Activated T-helper 2 cell treated with anti-CD3 and anti-CD28 coated beads, Interferon-gamma antibody, Interleukin-2, Interleukin-4, amounts not matched to agents 10 μg/mL and 5 μg/mL and 100 μg/mL, durations not matched to agents 14 hours and 24 hours and 36 hours (primary cell): ENCODE measurements at regions of chr7 and their contacts with region 1.

Region 1: DNA sequence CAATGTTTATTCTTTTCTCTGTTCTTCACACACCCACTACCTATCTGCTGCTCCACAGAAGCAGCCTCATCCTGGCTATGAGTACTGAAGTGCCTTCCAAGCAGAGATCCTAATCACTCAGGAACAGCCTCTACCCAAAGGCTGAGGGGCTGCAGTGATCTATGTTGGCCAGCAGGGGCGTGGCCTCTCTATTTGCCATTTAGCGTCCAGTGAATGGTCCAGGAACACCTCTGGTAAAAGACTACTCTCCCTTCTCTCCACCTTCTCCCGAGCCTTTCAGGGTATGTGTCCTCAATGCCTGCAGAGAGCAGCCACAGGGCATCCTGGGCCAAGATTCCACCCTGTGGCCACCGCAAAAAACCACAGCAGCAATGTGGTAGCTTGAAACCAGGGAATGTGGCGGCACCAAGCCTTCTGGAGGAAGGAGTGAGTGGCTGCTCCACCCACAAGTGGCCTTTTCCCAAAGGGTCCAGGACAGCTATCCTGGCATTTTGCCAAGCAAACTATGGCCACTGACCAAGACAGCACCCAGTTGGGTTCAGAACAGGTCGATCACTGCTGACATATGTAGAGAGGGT is 70.9 kb downstream of the SYPL1 start:
- DNase-seq: no peak
- H3K4me3 Mint-ChIP-seq: no peak overlapping the region
- H3K27ac Mint-ChIP-seq: no peak overlapping the region
- H3K4me1 Mint-ChIP-seq: peaks cover 6% of the 10 kb centered on the region
- H3K27me3 Mint-ChIP-seq: peaks cover 16% of the 10 kb centered on the region

Region 2: DNA sequence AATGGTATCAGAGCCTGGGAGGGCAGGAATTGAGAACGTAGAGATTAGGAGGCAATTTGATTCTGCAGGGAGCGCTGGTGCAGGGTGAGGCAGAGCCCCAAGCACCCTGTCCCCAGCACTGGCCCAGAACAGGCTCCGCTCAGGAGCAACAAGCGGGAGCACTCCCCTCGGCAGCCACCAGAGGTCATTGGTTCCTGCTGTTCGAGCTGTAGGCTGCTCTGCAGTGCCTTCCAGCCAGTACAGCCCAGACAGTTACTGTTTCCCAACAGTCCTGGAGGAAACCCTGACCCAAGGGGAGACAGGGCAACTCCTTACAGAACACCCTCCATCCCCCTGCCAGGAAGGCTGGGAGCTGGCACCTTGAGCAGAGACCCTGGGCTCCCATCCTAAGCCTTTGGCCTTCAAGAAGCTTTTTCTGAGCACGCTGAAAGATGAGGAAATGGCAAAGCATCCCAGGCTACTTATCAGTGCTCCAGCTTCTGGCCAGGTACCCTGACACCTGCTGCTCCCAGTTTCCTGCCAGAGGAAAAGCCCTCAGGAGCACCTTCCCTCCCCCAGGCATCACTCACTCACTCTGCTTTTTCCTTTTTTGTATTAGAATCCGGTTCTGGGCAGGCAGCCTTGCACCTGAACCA is 388.8 kb before region 1 on chr7:
- intact Hi-C with region 1: loop called (anchors 1 kb)
- DNase-seq: peak; percentile 47
- H3K4me3 Mint-ChIP-seq: no peak overlapping the region
- H3K27ac Mint-ChIP-seq: no peak overlapping the region
- H3K4me1 Mint-ChIP-seq: peaks cover 19% of the 10 kb centered on the region
- H3K27me3 Mint-ChIP-seq: no peaks in the 10 kb centered on the region

Region 3: GRCh38 chr7:105759670-105760550 is 281.3 kb before region 1 on chr7:
- intact Hi-C with region 1: loop called (anchors 1 kb)
- DNase-seq: no peak
- H3K4me3 Mint-ChIP-seq: no peak overlapping the region
- H3K27ac Mint-ChIP-seq: no peak overlapping the region
- H3K4me1 Mint-ChIP-seq: peaks cover 31% of the 10 kb centered on the region
- H3K27me3 Mint-ChIP-seq: peaks cover 6% of the 10 kb centered on the region

Region 4: GRCh38 chr7:105924945-105925344 is 116.3 kb before region 1 on chr7:
- intact Hi-C with region 1: loop called (anchors 5 kb)
- DNase-seq: peak; percentile 32
- H3K4me3 Mint-ChIP-seq: no peak overlapping the region
- H3K27ac Mint-ChIP-seq: peak overlapping the region; percentile 4
- H3K4me1 Mint-ChIP-seq: peaks cover 19% of the 10 kb centered on the region
- H3K27me3 Mint-ChIP-seq: peaks cover 11% of the 10 kb centered on the region

Region 5: DNA sequence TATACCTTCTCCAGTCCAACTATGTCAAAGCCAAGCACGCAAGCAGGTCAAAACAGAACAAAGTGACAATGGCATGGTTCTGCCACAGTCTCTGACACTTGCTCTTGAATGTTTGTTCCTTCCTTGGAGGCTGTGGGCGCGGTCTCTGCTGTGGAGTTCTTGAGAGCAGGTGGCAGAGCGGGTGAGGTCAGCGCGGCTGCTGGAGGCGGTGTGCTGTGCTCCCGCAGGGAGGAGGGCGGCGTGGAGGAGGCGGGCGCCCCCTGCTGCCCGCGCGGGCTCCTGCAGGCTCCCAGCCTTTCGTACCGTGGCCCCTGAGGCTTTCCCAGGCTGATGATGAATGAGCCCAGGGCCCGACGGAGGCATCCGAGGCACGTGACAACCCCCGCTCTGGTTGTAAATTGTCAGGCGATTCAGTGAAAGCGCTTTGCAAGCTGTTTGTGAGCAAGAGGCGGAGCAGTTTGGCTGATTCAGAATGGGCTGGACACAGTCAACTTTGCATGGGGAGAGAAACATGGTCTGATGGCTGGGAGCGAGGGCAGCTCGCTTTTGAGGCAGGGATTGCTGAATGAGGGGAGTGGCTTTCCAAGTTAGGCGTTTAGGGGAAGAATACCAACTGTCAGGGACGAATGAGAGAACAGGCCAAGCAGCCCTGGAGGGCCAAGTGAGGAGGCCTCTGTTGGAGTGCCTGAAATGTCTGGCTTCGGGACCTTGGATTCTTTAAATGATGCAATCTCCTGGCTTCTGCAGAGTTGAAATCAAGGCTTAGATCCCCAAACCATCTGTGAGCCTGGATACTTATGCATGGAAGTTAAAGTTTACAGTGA is 31.6 kb before region 1 on chr7:
- intact Hi-C with region 1: loop called (anchors 5 kb)
- DNase-seq: peak; percentile 75
- H3K4me3 Mint-ChIP-seq: no peak overlapping the region
- H3K27ac Mint-ChIP-seq: no peak overlapping the region
- H3K4me1 Mint-ChIP-seq: peaks cover 14% of the 10 kb centered on the region
- H3K27me3 Mint-ChIP-seq: peaks cover 31% of the 10 kb centered on the region

Region 6: GRCh38 chr7:106022193-106022821 is 18.9 kb before region 1 on chr7:
- intact Hi-C with region 1: no loop called
- DNase-seq: peak; percentile 68
- H3K4me3 Mint-ChIP-seq: peak overlapping the region; percentile 6
- H3K27ac Mint-ChIP-seq: peak overlapping the region; percentile 85
- H3K4me1 Mint-ChIP-seq: peaks cover 53% of the 10 kb centered on the region
- H3K27me3 Mint-ChIP-seq: peaks cover 7% of the 10 kb centered on the region

Region 7: GRCh38 chr7:106176414-106177299 is 135.4 kb after region 1 on chr7:
- intact Hi-C with region 1: no loop called
- DNase-seq: peak; percentile 56
- H3K4me3 Mint-ChIP-seq: no peak overlapping the region
- H3K27ac Mint-ChIP-seq: no peak overlapping the region
- H3K4me1 Mint-ChIP-seq: peaks cover 5% of the 10 kb centered on the region
- H3K27me3 Mint-ChIP-seq: peaks cover 21% of the 10 kb centered on the region

Region 8: DNA sequence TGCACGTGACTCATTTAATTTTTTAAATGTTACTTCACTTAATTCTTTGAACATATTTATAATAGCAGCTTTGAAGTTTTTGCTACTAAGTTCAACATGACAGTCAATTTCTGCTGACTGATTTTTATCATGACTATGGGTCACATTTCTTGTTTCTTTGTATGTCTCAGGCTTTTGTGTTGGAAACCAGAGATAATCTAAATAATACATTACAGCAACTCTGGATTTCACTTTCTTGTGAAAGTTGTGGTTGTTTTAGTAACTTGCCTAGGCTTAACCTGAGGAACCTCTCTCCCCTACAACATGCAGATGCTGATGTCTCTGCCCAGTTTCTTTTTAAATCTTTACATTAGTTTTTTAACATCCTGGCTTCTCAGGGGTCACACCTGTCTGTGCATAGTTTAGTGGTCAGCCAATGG is 438.9 kb after region 1 on chr7:
- intact Hi-C with region 1: no loop called
- DNase-seq: no peak
- H3K4me3 Mint-ChIP-seq: no peak overlapping the region
- H3K27ac Mint-ChIP-seq: peak overlapping the region; percentile 80
- H3K4me1 Mint-ChIP-seq: peaks cover 39% of the 10 kb centered on the region
- H3K27me3 Mint-ChIP-seq: peaks cover 2% of the 10 kb centered on the region

Region 9: GRCh38 chr7:107090457-107090856 is 1049.2 kb after region 1 on chr7:
- intact Hi-C with region 1: no loop called
- DNase-seq: no peak
- H3K4me3 Mint-ChIP-seq: no peak overlapping the region
- H3K27ac Mint-ChIP-seq: no peak overlapping the region
- H3K4me1 Mint-ChIP-seq: no peaks in the 10 kb centered on the region
- H3K27me3 Mint-ChIP-seq: peaks cover 5% of the 10 kb centered on the region